ENCODE measurements at regions of chr17 and their contacts with region 1.

Region 1: GRCh38 chr17:49315551-49316257 is 46.3 kb downstream of the ZNF652 start:
- DNase-seq: peak; percentile 71 to 78 (median 71)
- ATAC-seq: peak; percentile 99 to 100 (median 100)
- H3K4me3 ChIP-seq: peak overlapping the region in 1 of 3 donors; percentile 20
- H3K27ac ChIP-seq: no peak overlapping the region
- H3K4me1 ChIP-seq: peaks cover 0 to 9% (median 4%) of the 10 kb centered on the region in 4 donors
- H3K27me3 ChIP-seq: no peaks in the 10 kb centered on the region
- CTCF ChIP-seq: peak; percentile 82 to 88 (median 84)
- POLR2A ChIP-seq: no peak

Region 2: GRCh38 chr17:49390548-49391324 is 75.0 kb after region 1 on chr17:
- intact Hi-C with region 1: loop called (anchors 5 kb)
- DNase-seq: peak in 2 of 3 donors; percentile 38 to 61
- ATAC-seq: peak; percentile 64 to 75 (median 70)
- H3K4me3 ChIP-seq: no peak overlapping the region
- H3K27ac ChIP-seq: peak overlapping the region in 2 of 3 donors; percentile 40 to 53
- H3K4me1 ChIP-seq: peaks cover 0 to 4% (median 0%) of the 10 kb centered on the region in 4 donors
- H3K27me3 ChIP-seq: no peaks in the 10 kb centered on the region
- CTCF ChIP-seq: no peak
- POLR2A ChIP-seq: no peak

Region 3: DNA sequence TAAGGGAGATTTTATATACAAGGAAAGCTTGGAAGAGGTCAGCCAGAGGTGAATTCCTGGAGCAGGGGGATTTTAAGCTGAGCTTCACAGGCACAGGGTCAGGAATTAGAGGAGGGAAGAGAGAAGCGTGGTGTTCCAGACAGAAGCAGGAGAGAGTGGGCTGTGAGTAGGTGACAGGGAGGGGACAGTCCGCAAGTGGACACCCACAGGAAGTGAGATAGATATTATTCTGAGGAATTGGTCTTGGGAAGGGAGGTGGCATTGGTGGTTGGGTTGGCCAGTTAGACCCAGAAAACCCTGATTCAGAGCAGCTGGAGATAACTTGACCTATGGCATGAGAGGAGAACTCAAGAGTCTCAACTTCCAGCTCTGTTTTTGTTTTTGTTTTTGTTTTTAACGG is 84.3 kb after region 1 on chr17:
- intact Hi-C with region 1: loop called in 1 of 2 experiments (anchors 5 kb)
- DNase-seq: no peak
- ATAC-seq: no peak
- H3K4me3 ChIP-seq: no peak overlapping the region
- H3K27ac ChIP-seq: no peak overlapping the region
- H3K4me1 ChIP-seq: peaks cover 0 to under 1% (median 0%) of the 10 kb centered on the region in 4 donors
- H3K27me3 ChIP-seq: no peaks in the 10 kb centered on the region
- CTCF ChIP-seq: no peak
- POLR2A ChIP-seq: no peak

Measured in right lobe of liver (tissue), 6 donors.